Activated CD4-positive, alpha-beta memory T cell treated with anti-CD3 and anti-CD28 coated beads for 36 hours (primary cell): ENCODE measurements at regions of chr16 and their contacts with region 1.

Region 1: GRCh38 chr16:81314603-81315270 is at the start of gene GAN:
- DNase-seq: peak; percentile 98
- H3K4me3 Mint-ChIP-seq: peak within 1 kb of the TSS; percentile 84
- H3K27ac Mint-ChIP-seq: peak within 1 kb of the TSS; percentile 71
- H3K4me1 Mint-ChIP-seq: peaks cover 61% of the 10 kb centered on the region
- H3K27me3 Mint-ChIP-seq: no peaks in the 10 kb centered on the region
- total RNA-seq, gene GAN: 13.6 to 14.5 TPM

Region 2: DNA sequence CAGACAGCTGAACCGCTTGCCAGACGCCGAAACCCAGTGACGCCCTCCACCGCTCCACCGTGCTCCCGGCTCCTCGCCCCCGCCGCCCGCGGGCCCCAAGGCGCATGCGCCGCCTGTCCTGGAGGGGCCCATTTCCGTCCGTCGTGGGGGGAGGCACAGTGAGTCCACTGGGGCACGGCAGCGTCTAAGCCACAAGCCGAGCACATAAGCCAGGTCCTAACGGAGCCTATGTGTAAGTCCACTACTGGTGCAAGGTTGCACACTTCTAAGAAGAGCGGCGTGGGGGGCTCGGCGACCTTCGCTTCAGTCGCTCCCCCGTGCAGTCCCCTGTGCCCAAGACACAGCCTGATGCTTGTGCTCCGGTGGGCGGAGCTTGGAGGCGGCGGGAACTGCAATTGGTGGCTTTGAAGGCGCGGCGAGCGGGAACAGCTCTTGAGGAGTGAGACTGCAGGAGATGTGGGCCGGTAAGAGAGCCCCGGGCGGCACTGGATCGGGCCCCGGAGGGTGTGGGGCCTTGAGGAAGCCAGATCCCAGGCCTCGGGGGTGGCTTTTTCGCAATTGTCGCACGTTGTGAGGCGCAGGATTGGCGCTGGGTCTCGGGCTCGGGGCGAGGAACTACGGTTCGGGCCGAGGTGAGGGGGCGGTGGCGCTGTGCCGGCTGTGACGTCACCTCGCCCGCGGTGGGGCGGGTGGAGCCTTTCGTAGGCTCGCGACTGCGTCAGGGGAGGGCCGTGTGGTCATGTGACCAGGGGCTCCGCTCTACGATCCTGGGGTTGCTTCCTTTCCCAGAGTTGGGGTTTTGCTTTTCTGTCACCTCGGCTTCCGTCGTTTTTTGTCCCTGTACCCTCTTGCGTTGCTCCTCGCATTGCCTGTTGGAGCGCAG is 307.7 kb before region 1 on chr16 and contains the starts of genes CENPN and CMC2:
- CTCF ChIA-PET with region 1: interaction called, 3 read pairs
- POLR2A ChIA-PET with region 1: no interaction called
- intact Hi-C with region 1: loop called (anchors 10 kb)
- DNase-seq: peak; percentile 98
- H3K4me3 Mint-ChIP-seq: peak within 1 kb of the TSS; percentile 88
- H3K27ac Mint-ChIP-seq: peak within 1 kb of the TSS; percentile 98
- H3K4me1 Mint-ChIP-seq: peaks cover 41% of the 10 kb centered on the region
- H3K27me3 Mint-ChIP-seq: no peaks in the 10 kb centered on the region
- total RNA-seq, gene CENPN: 71.9 to 76.0 TPM
- total RNA-seq, gene CMC2: 147 to 148 TPM

Region 3: DNA sequence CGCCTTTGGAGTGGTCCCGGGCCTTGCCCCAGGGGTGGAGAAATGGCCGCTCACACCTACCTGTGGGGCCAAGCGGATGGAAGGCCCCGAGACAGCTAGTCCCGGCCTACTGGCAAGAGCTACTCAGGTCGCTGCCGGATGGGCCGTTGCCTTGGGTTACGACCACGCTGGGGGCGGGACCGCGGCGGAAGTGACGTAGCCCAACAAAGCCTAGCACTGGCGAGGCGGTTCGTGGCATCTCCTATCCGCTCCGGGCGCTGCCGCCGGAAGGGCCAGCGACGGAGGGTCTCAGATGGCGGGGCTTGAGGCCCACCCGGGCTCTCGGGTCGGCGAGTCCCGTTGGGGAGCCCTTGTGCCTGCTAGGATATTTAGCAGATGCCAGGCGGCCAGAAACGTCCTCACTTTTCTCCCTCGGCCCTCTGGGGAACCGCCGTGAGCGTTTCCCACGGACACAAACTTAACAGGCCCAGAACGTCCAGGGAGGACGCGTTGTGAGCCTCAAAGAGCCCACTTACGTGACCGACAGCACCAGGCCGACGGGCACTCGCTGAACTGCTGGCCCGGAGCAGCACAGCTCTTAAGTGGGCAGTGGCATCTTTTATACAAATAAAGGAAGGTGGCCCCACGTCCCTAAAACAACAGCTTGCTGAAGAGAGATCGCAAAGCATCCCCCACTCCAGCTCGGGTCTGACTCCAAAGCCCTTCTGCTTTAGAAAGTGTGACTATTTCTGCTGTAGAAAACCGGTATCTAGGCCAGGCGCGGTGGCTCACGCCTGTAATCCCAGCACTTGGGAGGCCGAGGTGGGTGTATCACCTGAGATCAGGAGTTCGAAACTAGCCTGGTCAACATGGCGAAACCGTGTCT is 237.4 kb before region 1 on chr16 and contains the start of gene C16orf46:
- CTCF ChIA-PET with region 1: no interaction called
- POLR2A ChIA-PET with region 1: interaction called, 3 read pairs
- intact Hi-C with region 1: loop called (anchors 1 kb)
- DNase-seq: peak; percentile 99
- H3K4me3 Mint-ChIP-seq: peak within 1 kb of the TSS; percentile 32
- H3K27ac Mint-ChIP-seq: no peak within 1 kb of the TSS
- H3K4me1 Mint-ChIP-seq: peaks cover 3% of the 10 kb centered on the region
- H3K27me3 Mint-ChIP-seq: no peaks in the 10 kb centered on the region
- total RNA-seq, gene C16orf46: 0.44 to 0.86 TPM

Region 4: DNA sequence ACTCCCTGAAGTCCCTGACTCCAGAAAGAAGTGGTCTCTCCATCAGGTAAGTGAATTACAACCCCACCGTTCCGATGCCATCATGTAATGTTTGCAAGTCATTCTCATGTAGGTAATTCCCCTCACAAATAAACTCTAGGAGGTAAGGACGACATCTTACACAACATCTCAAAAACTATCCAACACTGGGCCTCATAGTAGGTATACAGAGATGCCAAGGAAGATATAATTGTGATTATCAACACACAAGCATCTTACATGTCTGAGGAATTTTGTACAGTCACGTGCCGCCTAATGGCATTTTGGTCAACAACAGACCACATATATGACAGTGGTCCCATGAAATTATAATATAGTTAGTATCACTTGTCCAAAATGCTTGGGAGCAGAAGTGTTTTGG is 225.9 kb before region 1 on chr16:
- CTCF ChIA-PET with region 1: no interaction called
- POLR2A ChIA-PET with region 1: no interaction called
- intact Hi-C with region 1: no loop called
- DNase-seq: no peak
- H3K4me3 Mint-ChIP-seq: no peak overlapping the region
- H3K27ac Mint-ChIP-seq: no peak overlapping the region
- H3K4me1 Mint-ChIP-seq: peaks cover 2% of the 10 kb centered on the region
- H3K27me3 Mint-ChIP-seq: no peaks in the 10 kb centered on the region

Region 5: GRCh38 chr16:81261049-81261648 is 53.6 kb before region 1 on chr16:
- CTCF ChIA-PET with region 1: interaction called, 12 read pairs
- POLR2A ChIA-PET with region 1: no interaction called
- intact Hi-C with region 1: loop called (anchors 5 kb)
- DNase-seq: peak; percentile 49
- H3K4me3 Mint-ChIP-seq: no peak overlapping the region
- H3K27ac Mint-ChIP-seq: no peak overlapping the region
- H3K4me1 Mint-ChIP-seq: no peaks in the 10 kb centered on the region
- H3K27me3 Mint-ChIP-seq: peaks cover 10% of the 10 kb centered on the region

Region 6: DNA sequence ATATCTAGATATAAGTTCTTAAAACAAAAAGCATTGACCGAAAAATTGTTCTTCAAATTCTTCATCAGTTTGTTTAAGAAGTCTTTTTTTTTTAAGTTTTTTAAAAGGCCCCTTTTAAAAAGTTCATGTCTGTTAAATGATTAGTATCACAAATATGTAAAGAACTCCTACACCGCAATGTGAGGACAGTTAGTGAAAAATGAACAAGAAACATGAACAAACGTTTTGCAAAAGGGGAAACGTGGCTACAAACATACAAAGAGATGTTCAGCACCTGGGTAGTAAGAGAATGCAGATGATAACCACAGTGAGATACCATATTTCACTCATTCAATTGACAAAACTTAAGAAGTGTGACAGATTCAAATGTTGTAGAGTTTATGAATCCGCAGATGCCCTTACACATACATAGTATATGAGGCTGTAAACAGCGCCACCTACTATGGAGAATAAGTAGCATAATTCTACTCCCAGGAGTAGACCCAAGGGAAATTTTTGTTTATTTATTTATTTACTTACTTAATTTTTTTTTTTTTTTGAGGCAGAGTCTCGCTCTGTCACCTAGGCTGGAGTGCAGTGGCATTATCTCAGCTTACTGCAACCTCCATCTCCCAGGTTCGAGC is 35.4 kb after region 1 on chr16:
- CTCF ChIA-PET with region 1: interaction called, 3 read pairs
- POLR2A ChIA-PET with region 1: no interaction called
- intact Hi-C with region 1: loop called (anchors 5 kb)
- DNase-seq: no peak
- H3K4me3 Mint-ChIP-seq: no peak overlapping the region
- H3K27ac Mint-ChIP-seq: no peak overlapping the region
- H3K4me1 Mint-ChIP-seq: peaks cover 11% of the 10 kb centered on the region
- H3K27me3 Mint-ChIP-seq: no peaks in the 10 kb centered on the region

Region 7: DNA sequence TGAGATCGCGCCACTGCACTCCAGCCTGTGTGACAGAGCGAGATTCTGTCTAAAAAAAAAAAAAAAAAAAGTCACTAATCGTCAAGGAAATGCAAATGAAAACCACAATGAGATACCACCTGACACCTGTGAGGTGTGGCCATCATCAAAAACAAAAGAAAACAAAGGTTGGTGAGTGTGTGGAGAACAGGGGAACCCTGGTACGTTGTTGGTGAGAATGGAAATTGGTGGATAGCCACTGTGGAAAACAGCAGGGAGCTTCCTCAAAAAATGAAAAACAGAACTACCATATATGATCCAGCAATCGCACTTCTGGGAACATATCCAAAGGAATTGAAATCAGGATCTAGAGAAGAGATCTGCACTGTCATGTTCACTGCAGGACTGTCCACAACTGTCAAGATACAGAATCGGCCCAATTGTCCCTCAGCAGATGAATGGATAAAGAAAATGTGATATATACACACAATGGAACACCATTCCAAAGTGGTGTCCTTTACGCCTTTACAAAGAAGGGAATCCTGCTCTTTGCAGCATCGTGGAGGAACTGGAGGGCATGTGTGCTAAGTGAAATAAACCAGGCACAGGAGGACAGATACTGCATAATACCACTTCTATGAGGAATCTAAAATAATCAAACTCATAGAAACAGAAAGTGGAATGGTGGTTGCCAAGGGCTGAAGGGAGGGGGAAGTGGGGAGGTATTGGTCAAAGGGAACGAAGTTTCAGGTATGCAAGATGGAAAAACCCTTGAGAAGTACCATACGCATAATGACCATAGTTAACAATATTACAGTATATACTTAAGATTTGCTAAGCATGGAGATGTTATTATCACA is 400.8 kb after region 1 on chr16:
- CTCF ChIA-PET with region 1: no interaction called
- POLR2A ChIA-PET with region 1: no interaction called
- intact Hi-C with region 1: loop called (anchors 5 kb)
- DNase-seq: peak; percentile 40
- H3K4me3 Mint-ChIP-seq: peak overlapping the region; percentile 34
- H3K27ac Mint-ChIP-seq: peak overlapping the region; percentile 57
- H3K4me1 Mint-ChIP-seq: peaks cover 44% of the 10 kb centered on the region
- H3K27me3 Mint-ChIP-seq: no peaks in the 10 kb centered on the region